ENCODE measurements at regions of chr3 and their contacts with region 1.

Region 1: DNA sequence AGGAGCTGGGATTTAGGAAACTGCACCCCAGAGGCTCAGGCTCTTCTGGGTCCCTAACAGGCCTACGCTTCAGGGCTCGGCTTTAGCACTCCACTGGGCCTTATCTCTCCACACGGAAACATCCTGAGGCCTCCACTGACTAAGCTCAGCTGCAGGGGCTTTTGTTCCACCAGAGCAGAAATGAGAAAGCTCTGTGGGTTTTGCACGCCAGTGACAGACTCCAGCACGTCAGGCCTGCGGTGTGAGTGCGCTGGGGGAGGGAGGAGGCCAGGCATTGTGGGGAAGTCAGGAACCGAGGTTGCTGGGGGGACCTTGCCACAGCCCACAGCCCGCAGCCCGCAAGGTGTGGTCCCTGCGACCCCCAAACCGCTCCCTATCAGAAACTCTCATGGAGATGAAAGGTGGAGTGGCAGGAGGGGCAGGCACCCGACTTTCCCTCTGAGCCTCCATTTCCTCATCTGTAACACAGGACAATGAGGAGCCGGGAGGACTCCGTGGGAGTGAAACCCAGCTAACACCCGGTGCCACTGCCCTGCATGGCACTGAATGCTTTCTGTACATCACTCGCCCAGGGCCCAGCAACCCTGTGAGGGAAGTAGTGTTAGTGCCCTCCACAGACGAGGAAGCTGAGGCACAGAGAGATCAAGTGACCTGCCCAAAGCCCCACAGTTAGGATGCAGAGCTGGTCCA is 106.5 kb downstream of the TPRA1 start:
- DNase-seq: no peak
- ATAC-seq: no peak
- H3K4me3 ChIP-seq: no peak overlapping the region
- H3K4me1 ChIP-seq: no peaks in the 10 kb centered on the region
- CTCF ChIP-seq: no peak

Region 2: GRCh38 chr3:127089486-127090145 is 394.4 kb before region 1 on chr3:
- intact Hi-C with region 1: no loop called
- DNase-seq: no peak
- ATAC-seq: no peak
- H3K4me3 ChIP-seq: no peak overlapping the region
- H3K4me1 ChIP-seq: no peaks in the 10 kb centered on the region
- CTCF ChIP-seq: no peak

Region 3: GRCh38 chr3:127226946-127227842 is 256.9 kb before region 1 on chr3:
- intact Hi-C with region 1: no loop called
- DNase-seq: no peak
- ATAC-seq: peak; percentile 65
- H3K4me3 ChIP-seq: no peak overlapping the region
- H3K4me1 ChIP-seq: no peaks in the 10 kb centered on the region
- CTCF ChIP-seq: no peak

Region 4: DNA sequence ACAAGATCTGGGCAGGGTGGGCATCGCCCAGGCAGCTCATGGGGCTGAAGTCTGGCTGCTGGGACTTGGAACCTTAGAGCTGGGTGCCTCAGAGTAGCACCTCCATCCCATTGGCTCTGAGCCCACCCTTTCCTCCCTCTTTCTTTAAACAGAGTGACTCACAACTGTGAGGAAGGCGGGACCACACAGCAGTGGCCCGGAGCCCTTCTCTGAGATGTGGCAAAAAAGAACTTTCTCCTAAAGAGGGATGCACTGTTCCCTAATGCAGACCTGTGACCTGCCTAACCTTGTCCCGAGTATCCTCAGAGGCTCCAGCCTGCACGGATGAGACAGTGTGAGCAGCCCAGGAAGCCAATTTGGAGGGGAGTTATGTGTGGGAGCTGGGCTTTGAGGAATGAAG is 219.8 kb before region 1 on chr3:
- intact Hi-C with region 1: loop called in 1 of 2 experiments (anchors 10 kb)
- DNase-seq: no peak
- ATAC-seq: no peak
- H3K4me3 ChIP-seq: no peak overlapping the region
- H3K4me1 ChIP-seq: no peaks in the 10 kb centered on the region
- CTCF ChIP-seq: no peak

Region 5: DNA sequence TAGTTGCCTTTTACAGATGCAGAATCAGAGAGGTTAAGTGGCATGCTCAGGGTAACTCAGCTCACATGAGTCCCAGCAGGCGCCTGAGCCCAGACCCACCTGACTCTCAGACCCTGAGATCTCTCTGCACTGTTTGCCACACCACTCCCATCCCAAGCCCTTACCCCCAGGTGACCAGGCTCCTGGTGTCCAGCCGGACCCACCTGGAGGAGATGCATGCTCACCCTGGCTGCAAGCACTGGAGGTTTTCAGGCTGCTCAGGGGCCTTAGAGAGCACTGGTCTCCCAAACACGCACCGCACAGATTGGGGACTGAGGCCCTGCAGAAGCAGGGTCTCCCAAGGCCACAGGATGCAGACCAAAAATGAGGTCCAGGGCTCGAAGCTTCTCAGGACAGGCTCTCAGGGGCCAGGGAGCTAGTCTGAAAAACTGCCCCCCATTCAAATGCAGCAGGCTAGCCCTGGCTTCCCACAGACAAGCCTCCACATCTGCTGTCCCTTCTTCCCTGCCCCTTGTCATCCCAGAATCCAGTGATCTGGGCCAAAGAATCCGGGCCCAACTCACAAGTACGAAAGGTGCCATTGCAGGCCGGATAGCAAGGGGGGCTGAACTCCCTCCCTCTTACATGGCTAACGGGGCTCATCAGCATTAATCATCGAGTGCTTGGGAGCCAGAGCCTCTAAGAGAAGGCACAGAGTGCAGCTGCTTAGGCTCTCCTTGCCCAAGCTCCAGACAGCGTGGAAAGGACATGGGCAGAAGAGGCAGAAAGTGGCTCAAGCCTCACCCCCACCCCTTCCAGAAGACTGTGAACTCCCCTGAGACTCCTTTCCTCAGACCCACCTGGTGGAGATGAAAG is 106.0 kb before region 1 on chr3:
- intact Hi-C with region 1: no loop called
- DNase-seq: no peak
- ATAC-seq: no peak
- H3K4me3 ChIP-seq: no peak overlapping the region
- H3K4me1 ChIP-seq: no peaks in the 10 kb centered on the region
- CTCF ChIP-seq: no peak

Region 6: GRCh38 chr3:127614928-127615589 is 131.0 kb after region 1 on chr3:
- intact Hi-C with region 1: no loop called
- DNase-seq: no peak
- ATAC-seq: peak; percentile 77
- H3K4me3 ChIP-seq: no peak overlapping the region
- H3K4me1 ChIP-seq: no peaks in the 10 kb centered on the region
- CTCF ChIP-seq: no peak

Measured in mucosa of descending colon (tissue), 3 donors.